ENCODE measurements at regions of chrX and their contacts with region 1.

Region 1: DNA sequence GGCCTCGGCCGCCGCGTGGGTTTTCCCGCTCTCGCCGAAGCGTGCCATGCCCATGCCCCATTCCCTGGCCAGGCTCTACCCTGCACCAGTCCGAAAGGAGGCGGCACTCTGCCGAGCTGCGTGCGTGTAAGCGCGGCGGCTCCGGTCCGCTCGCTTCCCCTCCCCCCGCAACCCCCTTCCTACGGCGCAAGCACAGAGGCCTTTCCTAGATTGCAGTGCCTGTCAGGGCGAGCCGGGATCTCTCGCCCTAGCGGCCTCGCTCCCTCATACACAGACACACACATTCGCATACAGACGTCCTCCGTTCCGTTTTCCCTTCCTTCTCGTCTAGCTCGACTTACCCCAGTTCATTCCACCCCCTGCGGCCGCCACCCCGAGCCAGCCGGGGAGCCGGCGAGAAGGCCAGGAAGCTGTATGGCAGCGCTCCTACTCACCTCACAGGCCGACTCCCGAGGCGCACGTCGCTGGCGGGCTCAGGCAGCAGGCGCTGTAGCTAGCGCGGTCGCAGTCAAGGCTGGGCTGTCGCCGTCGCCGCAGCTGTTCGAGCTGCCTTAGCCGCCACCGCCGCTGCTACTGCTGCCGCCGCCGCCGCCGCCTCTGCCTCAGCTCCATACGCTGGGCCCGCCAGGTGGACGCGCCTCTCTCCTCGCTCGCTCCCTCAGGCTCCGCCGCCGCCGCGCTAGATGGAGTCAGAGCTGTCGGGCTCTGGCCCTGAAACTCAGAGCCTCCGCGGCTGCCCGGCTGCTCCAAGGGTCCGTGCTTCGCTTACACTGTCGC is 615 bp downstream of the NEXMIF start:
- DNase-seq: peak; percentile 80
- H3K4me3 ChIP-seq: peak overlapping the region; percentile 45 to 62 (median 59)
- H3K27ac ChIP-seq: peak overlapping the region; percentile 80 to 89 (median 84)
- H3K4me1 ChIP-seq: peaks cover 0 to 12% (median 0%) of the 10 kb centered on the region in 4 donors
- H3K27me3 ChIP-seq: no peaks in the 10 kb centered on the region
- CTCF ChIP-seq: no peak
- EP300 ChIP-seq: no peak
- POLR2A ChIP-seq: no peak

Region 2: GRCh38 chrX:74388998-74389722 is 535.5 kb before region 1 on chrX:
- intact Hi-C with region 1: no loop called
- DNase-seq: no peak
- H3K4me3 ChIP-seq: no peak overlapping the region
- H3K27ac ChIP-seq: no peak overlapping the region
- H3K4me1 ChIP-seq: no peaks in the 10 kb centered on the region
- H3K27me3 ChIP-seq: no peaks in the 10 kb centered on the region
- CTCF ChIP-seq: no peak
- EP300 ChIP-seq: no peak
- POLR2A ChIP-seq: no peak

Region 3: GRCh38 chrX:74614093-74614909 is 310.3 kb before region 1 on chrX and contains the start of gene RLIM:
- intact Hi-C with region 1: loop called (anchors 2 kb)
- DNase-seq: peak; percentile 97
- H3K4me3 ChIP-seq: peak within 1 kb of the TSS; percentile 66 to 85 (median 75)
- H3K27ac ChIP-seq: peak within 1 kb of the TSS; percentile 94 to 99 (median 96)
- H3K4me1 ChIP-seq: peaks cover 0 to 9% (median 2%) of the 10 kb centered on the region in 4 donors
- H3K27me3 ChIP-seq: no peaks in the 10 kb centered on the region
- CTCF ChIP-seq: no peak
- EP300 ChIP-seq: peak in 2 of 4 donors; percentile 34 to 47
- POLR2A ChIP-seq: peak; percentile 37 to 72
- total RNA-seq, gene RLIM: 20.4 to 36.4 (median 24.0) TPM

Region 4: GRCh38 chrX:75278991-75279390 is 354.4 kb after region 1 on chrX:
- intact Hi-C with region 1: loop called (anchors 5 kb)
- DNase-seq: no peak
- H3K4me3 ChIP-seq: no peak overlapping the region
- H3K27ac ChIP-seq: no peak overlapping the region
- H3K4me1 ChIP-seq: peaks cover 0 to 29% (median 16%) of the 10 kb centered on the region in 4 donors
- H3K27me3 ChIP-seq: no peaks in the 10 kb centered on the region
- CTCF ChIP-seq: no peak
- EP300 ChIP-seq: no peak
- POLR2A ChIP-seq: no peak